Transverse colon (tissue), 4 donors: ENCODE measurements at regions of chr9 and their contacts with region 1.

Region 1: GRCh38 chr9:77163884-77164283 is 13.4 kb upstream of the VPS13A start:
- DNase-seq: no peak
- H3K4me3 ChIP-seq: no peak overlapping the region
- H3K27ac ChIP-seq: no peak overlapping the region
- H3K4me1 ChIP-seq: peaks cover 0 to 4% (median 0%) of the 10 kb centered on the region in 4 donors
- H3K27me3 ChIP-seq: no peaks in the 10 kb centered on the region
- CTCF ChIP-seq: no peak
- EP300 ChIP-seq: no peak
- POLR2A ChIP-seq: no peak

Region 2: DNA sequence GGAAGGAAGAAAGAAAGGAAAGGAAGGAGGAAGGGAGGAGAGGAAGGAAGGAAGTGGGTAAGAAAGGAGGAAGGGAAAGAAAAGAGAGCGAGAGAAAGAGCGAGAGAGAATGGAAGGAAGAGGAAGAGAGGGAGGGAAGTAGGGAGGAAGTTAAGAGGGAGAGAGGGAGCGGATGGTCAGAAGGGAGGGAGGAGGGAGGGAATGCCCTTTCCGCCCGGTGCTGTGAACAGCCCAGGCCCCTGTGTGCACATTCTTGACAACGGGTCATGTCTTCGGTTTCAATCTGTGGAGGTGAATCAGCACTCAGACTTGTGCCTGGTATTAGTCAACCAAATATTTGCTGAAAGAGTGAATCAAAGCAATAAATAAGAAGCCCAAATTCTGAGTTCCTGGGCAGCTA is 297.2 kb before region 1 on chr9:
- in situ Hi-C with region 1: no loop called
- intact Hi-C with region 1: no loop called
- DNase-seq: no peak
- H3K4me3 ChIP-seq: no peak overlapping the region
- H3K27ac ChIP-seq: peak overlapping the region; percentile 45 to 79 (median 69)
- H3K4me1 ChIP-seq: peaks cover 0 to 10% (median 2%) of the 10 kb centered on the region in 4 donors
- H3K27me3 ChIP-seq: no peaks in the 10 kb centered on the region
- CTCF ChIP-seq: no peak
- EP300 ChIP-seq: no peak
- POLR2A ChIP-seq: no peak

Region 3: GRCh38 chr9:77215874-77216273 is 52.0 kb after region 1 on chr9:
- in situ Hi-C with region 1: no loop called
- intact Hi-C with region 1: loop called (anchors 10 kb)
- DNase-seq: no peak
- H3K4me3 ChIP-seq: no peak overlapping the region
- H3K27ac ChIP-seq: no peak overlapping the region
- H3K4me1 ChIP-seq: no peaks in the 10 kb centered on the region
- H3K27me3 ChIP-seq: no peaks in the 10 kb centered on the region
- CTCF ChIP-seq: peak in 1 of 5 experiments; percentile 14
- EP300 ChIP-seq: no peak
- POLR2A ChIP-seq: no peak